Endothelial cell of umbilical vein (primary cell): ENCODE measurements at regions of chr7 and their contacts with region 1.

Region 1: DNA sequence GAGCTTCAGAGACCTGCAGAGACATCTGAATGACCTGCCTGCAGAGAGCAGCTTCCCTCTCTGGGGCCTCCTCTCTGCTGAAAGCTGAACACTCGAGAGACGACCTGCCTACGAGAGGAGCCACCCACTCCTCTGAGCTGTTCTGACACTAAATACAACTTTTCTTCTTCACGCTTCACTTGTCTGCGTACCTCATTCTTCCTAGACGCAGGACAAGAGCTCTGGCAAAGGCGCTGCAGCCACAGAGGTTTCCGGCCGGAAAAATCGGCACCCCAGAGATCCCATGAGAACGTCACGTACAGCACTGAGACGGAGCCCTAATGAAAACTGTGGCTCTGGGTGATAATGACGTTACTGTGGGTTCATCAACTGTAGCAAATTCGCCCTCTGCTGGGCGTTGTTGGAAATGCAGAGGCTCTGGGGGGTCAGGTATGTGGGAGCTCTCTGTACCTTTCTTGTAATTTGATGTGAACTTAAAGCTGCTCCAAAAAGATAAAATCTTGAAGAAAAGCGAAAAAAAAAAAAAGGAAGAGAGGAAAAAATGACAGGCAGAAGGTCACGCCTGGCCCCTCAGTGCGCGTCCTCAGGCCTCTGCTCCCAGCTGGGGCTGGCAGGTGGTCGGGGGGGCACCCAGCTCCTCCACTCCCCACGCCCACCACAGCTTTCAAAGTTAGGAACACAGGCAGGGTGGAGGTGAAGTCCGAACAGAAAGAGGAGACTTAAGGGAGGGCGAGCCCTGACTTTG is 120.7 kb downstream of the DYNC2I1 start:
- DNase-seq: peak; percentile 77
- H3K4me3 ChIP-seq: peak overlapping the region in 2 of 3 experiments; percentile 21 to 28
- H3K27ac ChIP-seq: no peak overlapping the region
- H3K4me1 ChIP-seq: no peaks in the 10 kb centered on the region
- H3K27me3 ChIP-seq: no peaks in the 10 kb centered on the region
- CTCF ChIP-seq: peak; percentile 81 to 91
- POLR2A ChIP-seq: no peak

Region 2: DNA sequence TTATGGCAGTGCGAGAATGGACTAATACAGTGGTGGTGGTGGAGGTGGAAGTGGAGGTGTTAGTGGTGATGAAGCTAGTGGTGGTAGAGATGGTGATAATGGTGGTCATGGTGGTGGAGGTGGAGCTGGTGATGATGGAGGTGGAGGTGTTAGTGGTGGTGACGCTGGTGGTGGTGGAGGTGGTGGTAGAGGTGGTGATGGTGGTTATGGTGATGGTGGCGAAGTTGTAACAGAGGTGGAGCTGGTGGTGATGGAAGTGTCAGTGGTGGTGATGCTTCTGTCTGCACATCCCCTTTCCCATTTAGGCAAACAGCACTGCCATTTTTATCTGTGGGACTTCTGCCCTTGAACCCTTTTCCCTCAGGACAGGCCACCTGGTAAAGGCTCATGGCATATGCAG is 382.0 kb before region 1 on chr7:
- CTCF ChIA-PET with region 1: interaction called, 3 read pairs
- POLR2A ChIA-PET with region 1: no interaction called
- dilution Hi-C with region 1: no loop called
- intact Hi-C with region 1: loop called (anchors 5 kb)
- DNase-seq: peak; percentile 73
- H3K4me3 ChIP-seq: no peak overlapping the region
- H3K27ac ChIP-seq: no peak overlapping the region
- H3K4me1 ChIP-seq: no peaks in the 10 kb centered on the region
- H3K27me3 ChIP-seq: no peaks in the 10 kb centered on the region
- CTCF ChIP-seq: no peak
- POLR2A ChIP-seq: no peak

Region 3: DNA sequence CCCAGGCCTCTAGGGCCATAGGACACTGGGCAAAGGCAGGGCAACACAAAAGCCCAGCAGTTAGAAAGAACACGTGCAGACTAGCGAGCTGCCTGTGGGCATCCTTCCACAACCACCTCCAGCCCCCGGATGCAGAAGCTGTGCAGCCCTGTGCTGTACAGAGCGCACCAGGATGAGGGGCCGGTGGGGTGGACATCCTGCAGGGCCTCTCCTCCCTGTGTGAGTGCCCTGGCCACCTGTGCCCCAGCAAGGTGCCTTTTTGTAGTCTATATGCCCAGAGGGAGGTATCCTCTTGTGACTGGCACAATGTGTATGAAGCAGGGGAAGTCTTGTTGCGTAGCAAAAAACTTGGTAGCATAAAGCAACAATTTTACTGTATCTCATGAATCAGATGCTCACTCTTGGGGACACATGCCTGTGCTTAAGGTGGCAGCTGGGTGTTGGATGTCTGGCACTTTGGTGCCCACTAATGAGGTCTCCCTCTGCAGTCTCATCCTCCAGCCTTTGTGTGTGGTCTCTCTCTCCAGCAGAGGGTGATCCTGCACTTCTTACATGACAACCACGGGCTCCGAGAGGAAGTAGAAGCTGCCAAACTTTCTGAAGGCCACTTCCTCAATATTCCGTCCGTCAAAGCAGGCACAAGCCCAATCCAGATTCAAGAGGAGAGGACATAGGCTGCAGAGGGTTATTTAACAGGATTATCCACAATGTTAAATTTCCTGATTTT is 281.1 kb before region 1 on chr7:
- CTCF ChIA-PET with region 1: interaction called, 291 read pairs
- POLR2A ChIA-PET with region 1: no interaction called
- dilution Hi-C with region 1: no loop called
- intact Hi-C with region 1: loop called (anchors 1 kb)
- DNase-seq: peak; percentile 82
- H3K4me3 ChIP-seq: no peak overlapping the region
- H3K27ac ChIP-seq: no peak overlapping the region
- H3K4me1 ChIP-seq: peaks cover 6% of the 10 kb centered on the region
- H3K27me3 ChIP-seq: no peaks in the 10 kb centered on the region
- CTCF ChIP-seq: peak; percentile 63 to 72
- POLR2A ChIP-seq: no peak

Region 4: DNA sequence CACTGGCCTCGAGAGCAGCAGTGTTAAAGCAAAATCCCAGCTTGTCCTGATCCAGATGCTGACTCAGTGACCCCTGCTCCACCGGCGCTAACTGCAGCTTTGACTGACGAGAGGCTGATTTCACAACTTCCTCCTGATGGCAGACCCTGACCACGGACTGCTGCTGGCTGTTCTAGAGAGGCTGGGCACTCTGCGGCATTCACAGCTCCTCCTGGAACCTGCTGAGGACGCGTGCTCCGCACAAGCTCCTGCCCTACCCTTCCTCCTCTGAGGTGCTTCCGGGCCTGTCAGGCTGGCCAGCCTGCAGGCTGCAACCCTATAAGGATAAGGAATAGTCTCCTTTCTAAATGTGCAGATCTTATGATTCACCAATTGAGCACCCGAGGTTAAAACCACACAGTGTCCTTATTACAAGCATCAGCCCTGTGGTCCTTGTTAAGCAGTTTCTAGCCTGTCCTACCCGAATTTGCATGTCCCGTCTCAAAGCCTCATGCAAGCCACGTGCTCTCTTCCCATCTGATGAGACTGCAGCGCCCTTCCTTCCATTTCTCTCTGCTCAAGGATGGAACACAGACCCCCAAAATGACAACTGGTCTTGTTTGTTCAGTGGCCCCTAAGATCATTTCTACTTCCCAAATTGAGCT is 236.9 kb before region 1 on chr7:
- CTCF ChIA-PET with region 1: interaction called, 28 read pairs
- POLR2A ChIA-PET with region 1: no interaction called
- dilution Hi-C with region 1: no loop called
- intact Hi-C with region 1: no loop called
- DNase-seq: peak; percentile 89
- H3K4me3 ChIP-seq: peak overlapping the region in 1 of 3 experiments; percentile 9
- H3K27ac ChIP-seq: peak overlapping the region; percentile 69
- H3K4me1 ChIP-seq: peaks cover 25% of the 10 kb centered on the region
- H3K27me3 ChIP-seq: no peaks in the 10 kb centered on the region
- CTCF ChIP-seq: no peak
- POLR2A ChIP-seq: no peak

Region 5: DNA sequence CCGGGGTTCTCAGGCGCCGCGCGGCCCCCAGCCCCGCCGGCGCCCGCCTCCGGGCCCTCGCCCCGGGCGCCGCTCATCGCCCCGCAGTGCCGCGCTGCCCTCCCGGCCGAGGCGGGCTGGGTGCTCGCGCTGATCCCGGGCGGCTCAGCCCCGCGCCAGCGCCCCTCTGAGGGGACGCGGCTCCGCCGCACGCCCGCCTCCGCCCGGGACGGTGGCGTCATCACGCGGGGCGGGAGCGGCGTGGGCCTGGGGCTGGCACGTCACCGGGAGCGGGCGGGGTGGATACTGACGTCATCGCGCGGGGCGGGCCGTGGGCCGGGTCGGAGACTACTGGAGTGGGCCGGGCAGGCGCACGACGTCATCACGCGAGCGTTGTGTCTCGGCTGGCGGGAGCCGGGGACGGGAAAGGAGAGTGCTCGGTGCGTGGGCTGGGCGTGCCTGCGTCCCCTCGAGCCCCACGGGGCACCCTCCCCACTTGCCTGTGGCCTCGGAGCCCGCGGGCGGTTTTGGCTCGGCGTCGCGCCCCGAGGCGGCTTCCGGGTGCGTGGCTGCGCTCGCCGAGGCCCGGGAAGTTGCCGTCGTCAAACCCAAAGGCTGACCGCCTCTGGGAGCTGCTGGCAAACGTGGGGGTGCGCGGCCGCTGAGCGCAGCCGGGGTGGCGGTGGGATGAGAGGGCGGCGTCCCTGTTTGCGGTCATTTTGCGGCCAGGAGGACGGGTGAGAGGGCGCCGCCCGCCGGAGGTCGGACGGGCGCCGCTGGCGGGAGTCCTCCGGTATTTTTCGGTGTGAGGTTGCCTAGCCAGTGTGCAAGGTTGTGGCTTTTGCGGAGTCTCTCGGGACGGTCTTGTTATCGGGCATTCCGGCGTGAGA is 147.4 kb before region 1 on chr7 and contains the start of gene ESYT2:
- CTCF ChIA-PET with region 1: interaction called, 8 read pairs
- POLR2A ChIA-PET with region 1: no interaction called
- dilution Hi-C with region 1: no loop called
- intact Hi-C with region 1: loop called (anchors 2 kb)
- DNase-seq: peak; percentile 97
- H3K4me3 ChIP-seq: peak within 1 kb of the TSS; percentile 72 to 99 (median 80)
- H3K27ac ChIP-seq: peak within 1 kb of the TSS; percentile 66
- H3K4me1 ChIP-seq: peaks cover 10% of the 10 kb centered on the region
- H3K27me3 ChIP-seq: peaks cover 0 to 1% of the 10 kb centered on the region in 2 experiments
- CTCF ChIP-seq: peak in 1 of 2 donors; percentile 22
- POLR2A ChIP-seq: peak; percentile 92
- total RNA-seq, gene ESYT2: 40.6 and 46.6 TPM in 2 replicates

Region 6: GRCh38 chr7:158885624-158886023 is 91.4 kb before region 1 on chr7:
- CTCF ChIA-PET with region 1: interaction called, 51 read pairs
- POLR2A ChIA-PET with region 1: no interaction called
- dilution Hi-C with region 1: no loop called
- intact Hi-C with region 1: loop called (anchors 1 kb)
- DNase-seq: peak; percentile 21
- H3K4me3 ChIP-seq: no peak overlapping the region
- H3K27ac ChIP-seq: no peak overlapping the region
- H3K4me1 ChIP-seq: no peaks in the 10 kb centered on the region
- H3K27me3 ChIP-seq: no peaks in the 10 kb centered on the region
- CTCF ChIP-seq: peak; percentile 8 to 11
- POLR2A ChIP-seq: no peak